ENCODE measurements at regions of chr15 and their contacts with region 1.

Region 1: DNA sequence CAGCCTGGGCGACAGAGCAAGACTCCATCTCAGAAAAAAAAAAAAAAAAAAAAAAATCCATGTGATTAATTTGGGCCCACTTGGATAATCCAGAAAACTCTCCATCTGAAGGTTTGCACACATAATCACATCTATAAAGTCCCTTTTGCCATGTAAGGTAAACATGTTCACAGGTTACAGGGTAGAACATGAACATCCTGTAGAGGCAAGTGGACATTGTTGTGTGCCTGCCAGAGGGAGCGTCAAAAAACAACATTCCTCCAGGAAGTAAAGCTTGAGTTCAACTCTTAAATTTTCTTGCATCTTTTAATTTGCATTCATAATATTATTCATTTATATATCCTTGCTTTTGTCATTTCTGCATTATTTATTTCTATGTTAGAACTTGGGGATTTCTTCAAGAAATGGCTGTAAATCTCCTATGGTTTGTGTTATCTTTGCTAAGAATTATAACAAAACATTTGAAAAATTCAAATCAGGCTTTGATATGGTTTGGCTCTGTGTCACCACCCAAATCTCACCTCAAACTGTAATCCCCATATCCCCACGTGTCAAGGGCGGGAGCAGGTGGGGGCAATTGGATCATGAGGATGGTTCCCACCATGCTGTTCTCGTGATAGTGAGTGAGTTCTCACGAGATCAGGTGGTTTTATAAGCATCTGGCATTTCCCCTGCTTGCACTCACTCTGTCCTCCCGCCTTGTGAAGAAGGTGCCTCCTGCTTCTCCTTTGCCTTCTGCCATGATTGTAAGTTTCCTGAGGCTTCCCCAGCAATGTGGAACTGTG is 11.3 kb upstream of the TTBK2 start:
- H3K4me3 Mint-ChIP-seq: no peak overlapping the region
- H3K27ac Mint-ChIP-seq: no peak overlapping the region
- H3K4me1 Mint-ChIP-seq: no peaks in the 10 kb centered on the region
- H3K27me3 Mint-ChIP-seq: no peaks in the 10 kb centered on the region

Region 2: GRCh38 chr15:42704492-42704926 is 227.4 kb before region 1 on chr15:
- intact Hi-C with region 1: loop called (anchors 1 kb)
- H3K4me3 Mint-ChIP-seq: no peak overlapping the region
- H3K27ac Mint-ChIP-seq: no peak overlapping the region
- H3K4me1 Mint-ChIP-seq: no peaks in the 10 kb centered on the region
- H3K27me3 Mint-ChIP-seq: no peaks in the 10 kb centered on the region

Region 3: DNA sequence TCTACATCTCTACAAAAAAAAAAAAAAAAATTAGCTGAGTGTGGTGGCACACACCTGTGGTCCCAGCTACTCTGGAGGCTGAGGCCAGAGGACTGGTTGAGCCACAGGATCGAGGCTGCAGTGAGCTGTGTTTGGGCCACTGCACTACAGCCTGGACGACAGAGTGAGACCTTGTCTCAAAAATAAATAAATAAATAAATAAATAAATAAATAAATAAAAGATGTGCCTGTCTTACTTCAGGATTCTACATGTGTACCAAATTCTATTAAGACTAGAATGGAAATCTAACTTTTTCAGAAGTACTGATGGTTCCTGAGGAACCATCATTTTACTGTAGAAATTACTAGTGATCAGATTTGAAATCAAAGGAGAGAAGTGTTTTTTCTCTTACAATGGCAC is 63.2 kb before region 1 on chr15:
- intact Hi-C with region 1: no loop called
- H3K4me3 Mint-ChIP-seq: no peak overlapping the region
- H3K27ac Mint-ChIP-seq: no peak overlapping the region
- H3K4me1 Mint-ChIP-seq: no peaks in the 10 kb centered on the region
- H3K27me3 Mint-ChIP-seq: no peaks in the 10 kb centered on the region

Measured in dendritic cell treated with granulocyte-macrophage colony-stimulating factor and Interleukin-4, amounts not matched to agents 40 ng/mL and 50 ng/mL, for 4 days (primary cell).